ENCODE measurements at regions of chr9 and their contacts with region 1.

Region 1: GRCh38 chr9:77149879-77150278 is 27.5 kb upstream of the VPS13A start:
- DNase-seq: no peak
- H3K4me3 ChIP-seq: no peak overlapping the region
- H3K27ac ChIP-seq: no peak overlapping the region
- H3K4me1 ChIP-seq: no peaks in the 10 kb centered on the region
- H3K27me3 ChIP-seq: peaks cover 37% of the 10 kb centered on the region
- CTCF ChIP-seq: no peak

Region 2: GRCh38 chr9:76086539-76086938 is 1063.3 kb before region 1 on chr9:
- CTCF ChIA-PET with region 1: no interaction called
- POLR2A ChIA-PET with region 1: interaction called, 10 read pairs
- intact Hi-C with region 1: no loop called
- DNase-seq: no peak
- H3K4me3 ChIP-seq: no peak overlapping the region
- H3K27ac ChIP-seq: no peak overlapping the region
- H3K4me1 ChIP-seq: no peaks in the 10 kb centered on the region
- H3K27me3 ChIP-seq: peaks cover 47% of the 10 kb centered on the region
- CTCF ChIP-seq: no peak

Region 3: DNA sequence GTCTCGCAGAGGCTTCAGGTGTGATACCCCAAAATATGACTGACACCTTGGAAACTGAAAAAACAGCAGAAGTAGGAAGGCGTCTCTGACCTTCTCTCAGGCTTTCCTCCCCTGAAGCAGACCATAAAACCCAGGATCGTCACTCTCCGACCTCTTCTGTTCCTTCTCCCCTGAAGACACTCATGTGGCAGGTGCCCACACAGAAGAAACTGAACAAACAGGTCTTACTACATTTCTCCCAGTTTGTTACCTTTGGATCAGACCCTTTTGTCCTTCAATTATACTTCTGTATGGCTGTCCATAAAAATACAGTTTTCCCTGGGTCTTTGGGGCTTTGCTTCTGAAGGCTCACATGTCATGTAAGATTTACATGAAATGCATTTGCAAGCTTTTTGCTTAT is 233.6 kb before region 1 on chr9:
- CTCF ChIA-PET with region 1: interaction called, 13 read pairs
- POLR2A ChIA-PET with region 1: no interaction called
- intact Hi-C with region 1: no loop called
- DNase-seq: no peak
- H3K4me3 ChIP-seq: no peak overlapping the region
- H3K27ac ChIP-seq: no peak overlapping the region
- H3K4me1 ChIP-seq: no peaks in the 10 kb centered on the region
- H3K27me3 ChIP-seq: peaks cover 79% of the 10 kb centered on the region
- CTCF ChIP-seq: no peak

Region 4: DNA sequence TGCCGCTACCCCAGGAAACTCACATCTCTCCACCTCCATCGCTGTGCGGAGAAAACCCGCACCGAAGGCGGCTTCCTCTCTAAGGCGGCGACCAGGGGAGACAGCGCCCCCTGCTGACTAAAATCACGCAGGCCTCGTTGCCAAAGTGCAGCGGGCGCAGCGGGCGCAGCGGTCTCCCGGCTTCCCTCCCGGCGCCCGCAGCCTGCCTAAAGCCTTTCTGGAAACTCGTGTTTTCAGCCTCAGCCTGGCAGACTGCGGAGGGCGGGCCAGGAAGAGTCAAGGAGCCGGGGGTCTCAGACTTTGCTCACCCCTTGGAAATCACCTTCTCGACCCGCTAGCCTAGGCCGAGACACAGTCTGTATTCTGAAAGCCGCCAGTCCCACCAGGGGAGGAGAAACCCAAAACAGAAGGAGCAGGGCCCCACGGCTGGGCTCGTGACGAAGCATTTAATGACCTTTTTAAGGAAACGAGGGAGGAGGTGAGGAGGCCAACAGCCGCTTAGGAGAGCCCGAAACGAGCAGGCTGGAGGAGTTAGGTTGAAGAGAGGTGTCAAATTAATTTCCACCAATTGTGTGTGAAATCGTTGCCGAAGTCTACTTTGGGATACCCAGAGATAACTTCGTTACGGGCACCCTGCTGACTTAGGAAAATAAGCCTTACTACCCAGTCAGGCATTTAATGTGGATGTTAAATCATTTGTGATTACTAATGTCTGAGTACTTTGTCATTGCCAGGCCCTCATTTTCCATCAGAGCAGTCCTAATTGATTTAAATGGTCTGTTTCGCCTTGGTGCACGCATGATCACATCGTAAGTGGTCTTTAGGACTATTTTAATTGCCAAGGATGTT is 137.7 kb before region 1 on chr9:
- CTCF ChIA-PET with region 1: interaction called, 8 read pairs
- POLR2A ChIA-PET with region 1: no interaction called
- intact Hi-C with region 1: loop called (anchors 5 kb)
- DNase-seq: peak; percentile 81
- H3K4me3 ChIP-seq: peak overlapping the region; percentile 30
- H3K27ac ChIP-seq: no peak overlapping the region
- H3K4me1 ChIP-seq: peaks cover 5% of the 10 kb centered on the region
- H3K27me3 ChIP-seq: peaks cover 88% of the 10 kb centered on the region
- CTCF ChIP-seq: peak; percentile 97